Activated CD4-positive, alpha-beta memory T cell treated with anti-CD3 and anti-CD28 coated beads for 36 hours (primary cell): ENCODE measurements at regions of chr11 and their contacts with region 1.

Region 1: DNA sequence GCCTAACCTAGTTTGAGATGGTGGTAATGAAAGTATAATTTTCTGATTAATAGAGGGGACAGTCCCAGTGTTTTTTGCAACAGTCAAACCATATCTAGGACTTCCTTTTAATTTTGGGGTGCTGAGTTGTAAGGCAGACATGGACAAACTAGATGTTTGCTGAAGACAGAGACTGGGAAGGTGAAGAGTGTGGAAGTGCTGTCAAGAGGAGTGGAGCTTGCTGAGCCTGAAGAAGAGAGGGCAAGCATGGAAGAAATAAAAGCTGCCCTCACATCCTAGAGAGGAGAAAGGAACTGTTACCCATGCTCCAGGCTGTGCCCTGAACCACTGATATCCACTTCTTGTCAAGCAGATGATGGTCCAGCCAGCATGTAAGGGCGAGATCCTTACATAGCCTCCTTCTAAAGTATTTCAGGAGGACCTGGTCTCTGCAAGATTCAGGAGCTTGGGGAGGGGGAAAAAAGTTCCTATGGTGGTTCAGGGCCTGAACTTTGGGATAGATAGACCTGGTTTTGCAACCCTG is 51.4 kb downstream of the PRR5L start:
- DNase-seq: no peak
- H3K4me3 Mint-ChIP-seq: no peak overlapping the region
- H3K27ac Mint-ChIP-seq: peak overlapping the region; percentile 85
- H3K4me1 Mint-ChIP-seq: peaks cover 36% of the 10 kb centered on the region
- H3K27me3 Mint-ChIP-seq: peaks cover 6% of the 10 kb centered on the region

Region 2: DNA sequence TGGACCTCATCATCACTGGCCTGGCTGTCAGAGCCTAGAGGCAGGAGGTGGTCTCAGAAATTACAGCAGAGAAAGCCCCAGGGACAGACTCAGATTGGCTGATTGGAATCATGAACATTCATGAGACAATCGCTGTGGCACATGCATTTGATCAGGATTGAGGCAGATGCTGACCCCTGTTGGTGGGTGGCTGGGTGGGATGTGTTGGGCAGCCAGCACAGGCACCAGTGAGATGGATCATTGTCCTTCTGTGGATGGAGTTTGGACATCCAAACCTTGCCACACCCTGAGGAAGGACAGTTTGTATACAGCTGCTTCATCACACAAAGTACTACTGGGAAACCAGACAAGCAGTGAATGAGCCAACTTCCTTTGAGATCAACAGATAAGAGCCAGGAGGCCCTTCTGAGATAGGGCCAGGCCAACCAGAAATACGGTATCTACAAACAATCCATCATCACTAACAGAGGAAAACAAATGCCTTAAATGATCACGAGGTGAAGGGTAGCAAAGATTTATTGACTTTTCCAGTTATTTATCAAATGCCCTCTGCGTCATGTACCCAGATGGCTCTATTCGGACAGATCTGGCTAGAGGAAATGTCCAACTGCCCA is 75.5 kb before region 1 on chr11:
- CTCF ChIA-PET with region 1: no interaction called
- POLR2A ChIA-PET with region 1: no interaction called
- intact Hi-C with region 1: no loop called
- DNase-seq: no peak
- H3K4me3 Mint-ChIP-seq: no peak overlapping the region
- H3K27ac Mint-ChIP-seq: no peak overlapping the region
- H3K4me1 Mint-ChIP-seq: no peaks in the 10 kb centered on the region
- H3K27me3 Mint-ChIP-seq: no peaks in the 10 kb centered on the region

Region 3: DNA sequence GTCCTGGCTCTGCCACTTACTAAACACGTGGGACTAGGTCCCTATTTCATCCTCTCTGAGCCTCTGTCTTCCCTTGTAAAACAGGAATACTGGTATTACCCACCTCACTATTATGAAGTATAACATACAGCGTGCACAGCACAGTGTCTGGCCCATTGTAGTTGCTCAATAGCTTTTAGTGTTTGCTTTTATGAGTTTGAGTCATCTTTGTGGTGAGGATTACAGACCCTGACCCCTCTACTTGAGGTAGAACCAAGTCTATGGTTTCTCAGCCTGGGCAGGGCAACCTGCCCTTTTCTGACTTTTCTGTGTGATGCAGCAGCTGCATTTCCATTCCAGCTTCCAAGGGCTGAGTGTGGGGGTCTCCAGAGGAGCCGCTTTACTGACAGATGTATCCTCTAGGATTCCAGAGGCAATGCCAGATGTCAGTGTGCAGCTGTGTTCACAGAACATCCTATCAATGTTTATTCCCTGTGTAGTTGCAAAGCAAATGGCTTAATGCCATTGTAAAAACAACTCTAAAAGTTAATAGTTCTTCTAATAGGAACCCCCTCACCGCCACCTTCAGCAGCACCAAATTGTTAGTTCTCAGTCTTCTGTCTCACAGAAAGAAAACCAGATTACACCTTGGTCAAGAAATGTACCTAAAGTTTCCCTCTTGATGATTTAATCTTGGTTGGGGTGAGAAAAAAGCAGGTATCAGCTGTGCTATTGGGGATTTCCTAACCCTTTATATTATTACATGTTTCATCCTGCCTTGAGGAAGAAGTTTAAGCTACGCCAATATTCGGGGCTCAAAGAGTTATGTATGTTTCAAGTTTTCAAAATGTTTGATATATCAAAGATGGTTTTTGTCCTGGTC is 34.6 kb before region 1 on chr11:
- CTCF ChIA-PET with region 1: no interaction called
- POLR2A ChIA-PET with region 1: no interaction called
- intact Hi-C with region 1: loop called (anchors 2 kb)
- DNase-seq: no peak
- H3K4me3 Mint-ChIP-seq: no peak overlapping the region
- H3K27ac Mint-ChIP-seq: no peak overlapping the region
- H3K4me1 Mint-ChIP-seq: peaks cover 10% of the 10 kb centered on the region
- H3K27me3 Mint-ChIP-seq: peaks cover 14% of the 10 kb centered on the region

Region 4: GRCh38 chr11:36328956-36329673 is 18.3 kb before region 1 on chr11:
- CTCF ChIA-PET with region 1: no interaction called
- POLR2A ChIA-PET with region 1: no interaction called
- intact Hi-C with region 1: no loop called
- DNase-seq: no peak
- H3K4me3 Mint-ChIP-seq: no peak overlapping the region
- H3K27ac Mint-ChIP-seq: no peak overlapping the region
- H3K4me1 Mint-ChIP-seq: peaks cover 20% of the 10 kb centered on the region
- H3K27me3 Mint-ChIP-seq: no peaks in the 10 kb centered on the region